AG04449 (cell line): ENCODE measurements at regions of chr16 and their contacts with region 1.

Region 1: GRCh38 chr16:66608241-66609138 is 4.0 kb downstream of the CMTM3 start:
- DNase-seq: peak; percentile 51
- H3K4me3 ChIP-seq: no peak overlapping the region
- CTCF ChIP-seq: peak; percentile 95

Region 2: GRCh38 chr16:66406534-66407221 is 201.8 kb before region 1 on chr16:
- CTCF ChIA-PET with region 1: interaction called, 24 read pairs
- POLR2A ChIA-PET with region 1: interaction called, 3 read pairs
- DNase-seq: no peak
- H3K4me3 ChIP-seq: peak overlapping the region; percentile 68
- CTCF ChIP-seq: peak; percentile 81

Region 3: GRCh38 chr16:66588981-66589713 is 19.3 kb before region 1 on chr16:
- CTCF ChIA-PET with region 1: interaction called, 11 read pairs
- POLR2A ChIA-PET with region 1: no interaction called
- DNase-seq: no peak
- H3K4me3 ChIP-seq: no peak overlapping the region
- CTCF ChIP-seq: peak; percentile 46

Region 4: GRCh38 chr16:66639091-66639885 is 30.8 kb after region 1 on chr16:
- CTCF ChIA-PET with region 1: interaction called, 15 read pairs
- POLR2A ChIA-PET with region 1: no interaction called
- DNase-seq: no peak
- H3K4me3 ChIP-seq: no peak overlapping the region
- CTCF ChIP-seq: no peak

Region 5: DNA sequence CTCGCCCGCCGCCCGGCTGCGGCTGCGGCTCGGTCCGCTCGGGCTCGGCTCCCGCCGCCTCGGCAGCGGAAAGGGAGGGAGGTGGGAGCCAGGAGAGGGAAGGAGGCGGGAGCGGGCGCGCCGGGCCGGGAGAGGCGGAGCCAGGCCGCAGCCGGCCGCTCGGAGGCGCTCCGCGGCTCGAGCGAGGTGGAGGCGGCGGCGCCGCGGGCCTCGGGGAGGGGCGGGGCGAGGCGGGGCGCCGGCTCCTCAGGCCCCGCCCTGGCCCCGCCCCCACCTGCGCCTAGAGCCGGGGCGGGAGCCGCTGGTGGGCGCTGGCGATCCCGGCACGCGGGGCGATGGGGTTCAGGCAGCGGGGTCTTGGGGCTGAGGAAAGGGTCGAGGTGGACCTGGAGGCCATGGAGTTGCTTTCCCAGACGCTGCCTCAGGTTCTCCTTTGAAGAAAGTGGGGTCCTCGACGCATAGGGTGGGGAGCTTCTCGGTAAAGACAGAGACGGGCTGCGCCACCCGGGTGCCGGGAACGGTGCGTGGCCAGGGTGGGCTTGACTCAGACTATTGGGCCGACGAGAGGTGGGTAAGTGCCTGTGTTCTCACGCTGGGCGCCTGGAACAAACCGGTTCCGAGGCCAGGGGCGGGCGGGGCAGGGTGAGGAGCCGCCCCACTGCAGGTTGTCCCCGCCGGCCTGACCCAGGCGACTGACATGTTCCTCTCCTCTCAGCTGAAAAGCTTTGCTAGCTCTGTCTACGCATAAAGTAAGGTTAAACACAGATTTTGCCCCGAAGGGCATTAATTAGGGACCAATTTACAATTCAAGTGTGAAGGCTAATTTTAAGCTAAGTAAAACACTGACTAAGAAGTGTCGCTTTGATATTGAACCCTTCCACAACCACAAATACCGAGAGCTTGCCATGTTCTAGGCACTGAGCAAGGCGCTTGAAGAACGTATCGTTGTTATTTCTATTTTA is 88.5 kb after region 1 on chr16 and contains the start of gene CMTM4:
- CTCF ChIA-PET with region 1: interaction called, 22 read pairs
- POLR2A ChIA-PET with region 1: no interaction called
- DNase-seq: no peak
- H3K4me3 ChIP-seq: peak within 1 kb of the TSS; percentile 67
- CTCF ChIP-seq: peak; percentile 2

Region 6: DNA sequence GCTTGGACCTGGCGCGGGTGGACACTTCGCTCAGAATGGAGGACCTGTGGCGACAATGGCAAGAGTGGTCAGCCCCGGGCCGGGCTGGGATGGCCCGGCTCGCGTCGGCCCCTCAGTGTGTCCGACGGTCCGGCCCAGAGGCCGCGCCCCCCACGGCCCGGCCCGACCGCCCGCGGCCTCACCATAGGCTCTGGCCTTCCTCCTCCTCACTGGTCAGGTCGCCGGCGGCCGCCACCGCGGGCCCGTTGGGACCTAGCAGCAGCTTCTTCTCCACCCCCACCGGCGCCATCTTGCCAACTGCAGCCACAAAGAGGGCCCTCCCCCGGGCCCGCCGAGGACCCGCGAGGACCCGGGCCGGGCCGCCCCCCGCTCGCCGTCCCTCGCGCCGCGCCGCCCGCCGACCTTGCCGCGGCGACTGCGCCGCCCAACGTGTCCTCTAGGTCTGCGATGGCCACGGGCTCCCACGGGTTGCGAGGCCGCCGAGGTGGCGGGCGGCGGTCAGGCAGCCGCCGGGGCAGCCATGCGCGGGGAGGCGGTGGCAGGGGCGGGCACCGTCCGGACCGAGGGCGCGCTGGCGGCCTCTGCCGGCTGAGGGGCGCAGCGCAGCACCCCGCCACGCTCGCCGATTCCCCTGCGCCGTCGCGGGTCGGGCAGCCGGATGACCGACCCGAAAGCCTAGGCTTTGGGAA is 143.0 kb after region 1 on chr16 and contains the start of gene DYNC1LI2:
- CTCF ChIA-PET with region 1: interaction called, 16 read pairs
- POLR2A ChIA-PET with region 1: no interaction called
- DNase-seq: no peak
- H3K4me3 ChIP-seq: peak within 1 kb of the TSS; percentile 93
- CTCF ChIP-seq: peak; percentile 74